ENCODE measurements at regions of chr3 and their contacts with region 1.

Region 1: DNA sequence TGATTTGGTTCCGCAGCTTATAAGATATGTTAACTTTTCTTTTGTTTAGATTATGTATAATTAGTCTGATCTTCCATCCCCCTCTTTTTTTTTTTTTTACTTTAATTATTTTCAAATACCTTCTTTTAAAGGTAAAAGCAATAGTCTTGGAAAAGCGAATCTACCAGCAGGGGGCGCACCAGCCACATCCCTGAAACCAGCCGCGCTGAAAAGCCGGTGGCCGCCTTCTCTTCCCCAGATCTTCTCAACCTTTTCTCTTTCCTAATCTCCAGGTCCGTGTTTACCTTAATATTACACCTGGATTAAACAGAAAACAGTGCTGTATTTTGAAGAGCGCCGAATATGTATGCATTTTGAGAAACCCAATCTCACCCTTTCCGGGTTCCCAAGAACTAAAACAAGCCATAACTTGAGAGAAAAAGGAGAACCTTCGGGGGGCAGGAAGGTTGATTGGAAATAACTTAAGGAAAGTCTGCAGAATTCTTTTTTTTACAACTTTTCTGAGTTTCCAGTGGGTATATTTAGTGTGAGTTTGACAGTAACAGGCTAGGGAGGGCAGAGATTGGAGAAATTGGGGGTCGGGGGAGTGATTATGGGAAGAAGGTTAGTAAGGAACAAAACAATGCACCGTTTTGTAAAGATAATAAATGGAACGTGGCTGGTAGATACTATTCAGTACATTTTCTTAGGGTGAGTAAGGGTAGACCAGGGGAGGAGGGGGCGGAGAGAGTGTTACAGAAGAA is 2.0 kb upstream of the SOX2 start:
- DNase-seq: peak; percentile 82
- H3K4me3 Mint-ChIP-seq: no peak overlapping the region
- H3K27ac Mint-ChIP-seq: no peak overlapping the region
- H3K4me1 Mint-ChIP-seq: peaks cover 10% of the 10 kb centered on the region
- H3K27me3 Mint-ChIP-seq: peaks cover 54% of the 10 kb centered on the region

Region 2: DNA sequence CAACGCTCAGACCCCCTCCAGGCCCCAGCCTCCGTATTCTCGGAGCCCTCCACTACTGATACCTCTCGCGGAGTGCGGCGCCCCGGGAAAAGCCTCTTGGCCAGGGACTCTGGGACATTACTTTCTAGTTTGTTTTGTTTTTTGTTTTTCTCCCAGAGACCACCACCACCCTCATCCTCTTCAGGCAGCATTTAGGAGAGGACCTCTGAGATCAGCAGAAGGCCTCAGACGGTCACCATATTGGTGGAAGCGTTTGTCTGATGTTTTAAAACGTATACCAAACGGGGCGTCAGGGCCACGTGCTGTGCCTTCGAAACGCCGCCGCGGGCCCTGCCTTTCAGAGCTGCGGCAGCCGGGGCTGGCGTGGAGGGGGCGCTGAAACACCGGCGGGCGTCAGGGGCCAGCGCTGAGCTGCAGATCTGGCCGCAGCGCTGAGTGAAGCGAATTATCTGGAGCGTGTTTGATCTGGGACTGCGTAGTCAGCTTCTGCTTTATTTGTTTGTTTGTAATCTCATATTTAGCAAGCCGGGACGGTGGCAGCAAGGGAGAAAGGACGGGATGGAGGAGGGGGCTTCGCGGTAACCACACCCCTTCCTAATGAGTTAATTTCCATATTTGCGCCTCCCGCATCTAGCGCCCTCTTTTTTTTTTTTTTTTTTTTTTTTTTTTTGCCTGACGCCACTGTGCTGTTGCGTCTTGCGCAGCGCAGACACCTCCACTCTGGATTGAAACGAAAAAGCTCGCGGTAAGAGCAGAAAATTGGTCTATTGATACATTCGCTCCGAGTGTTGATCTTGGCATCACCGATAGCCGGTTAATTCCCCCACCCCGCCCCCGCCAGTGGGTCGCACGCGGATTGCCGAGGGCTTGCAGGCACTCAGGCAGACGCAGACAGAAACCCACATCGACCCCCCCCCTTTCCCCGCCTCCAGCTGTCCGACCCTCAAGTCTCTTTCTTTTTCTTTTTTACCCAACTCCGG is 16.9 kb after region 1 on chr3:
- CTCF ChIA-PET with region 1: interaction called, 3 read pairs
- intact Hi-C with region 1: loop called (anchors 1 kb)
- DNase-seq: no peak
- H3K4me3 Mint-ChIP-seq: peak overlapping the region; percentile 49
- H3K27ac Mint-ChIP-seq: no peak overlapping the region
- H3K4me1 Mint-ChIP-seq: peaks cover 22% of the 10 kb centered on the region
- H3K27me3 Mint-ChIP-seq: peaks cover 88% of the 10 kb centered on the region

Region 3: GRCh38 chr3:181773921-181774320 is 64.2 kb after region 1 on chr3:
- CTCF ChIA-PET with region 1: no interaction called
- intact Hi-C with region 1: no loop called
- DNase-seq: no peak
- H3K4me3 Mint-ChIP-seq: no peak overlapping the region
- H3K27ac Mint-ChIP-seq: no peak overlapping the region
- H3K4me1 Mint-ChIP-seq: no peaks in the 10 kb centered on the region
- H3K27me3 Mint-ChIP-seq: no peaks in the 10 kb centered on the region

Region 4: GRCh38 chr3:182258538-182259177 is 549.0 kb after region 1 on chr3:
- CTCF ChIA-PET with region 1: no interaction called
- intact Hi-C with region 1: loop called (anchors 1 kb)
- DNase-seq: no peak
- H3K4me3 Mint-ChIP-seq: no peak overlapping the region
- H3K27ac Mint-ChIP-seq: no peak overlapping the region
- H3K4me1 Mint-ChIP-seq: no peaks in the 10 kb centered on the region
- H3K27me3 Mint-ChIP-seq: peaks cover 7% of the 10 kb centered on the region

Region 5: DNA sequence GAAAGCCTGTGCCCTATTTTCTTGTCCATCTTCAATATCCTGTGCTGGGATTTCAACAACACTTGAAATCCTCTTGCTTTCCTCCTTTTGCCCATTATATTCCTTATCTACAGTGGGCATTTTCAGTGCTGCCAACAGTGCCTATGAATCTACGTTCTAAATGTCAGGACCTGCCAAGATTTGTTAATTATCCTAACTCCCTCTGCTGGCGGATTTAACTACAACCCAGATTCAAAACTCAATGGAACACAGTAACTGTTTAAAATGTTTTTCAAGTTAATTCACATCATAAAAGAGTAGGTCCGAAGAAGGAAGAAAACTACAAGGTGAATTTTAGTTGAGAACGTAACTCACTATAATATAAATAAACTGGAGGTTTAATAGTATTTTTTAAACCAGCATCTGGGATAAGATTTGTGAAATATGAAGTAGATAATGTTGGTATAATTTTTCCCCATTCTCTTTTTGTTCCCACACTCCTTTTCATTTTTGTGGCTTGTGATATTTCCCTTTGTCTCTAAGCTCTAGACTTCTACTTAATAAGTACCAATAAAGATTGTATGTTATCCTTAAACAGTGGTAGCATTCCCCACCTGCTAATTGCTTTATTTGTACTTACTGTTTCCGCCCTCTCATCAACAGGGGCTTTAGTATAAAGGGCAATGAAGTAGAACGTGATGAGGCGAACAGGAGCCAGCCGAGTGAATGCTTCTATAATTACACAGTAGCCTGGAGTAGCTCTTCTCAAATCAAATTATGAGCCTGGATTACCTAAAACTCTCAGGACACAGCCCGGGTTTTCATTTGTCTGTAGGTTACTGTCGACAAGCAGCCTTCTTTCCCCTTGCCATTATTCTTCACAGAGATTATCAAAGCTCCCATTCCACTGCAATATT is 781.1 kb after region 1 on chr3:
- CTCF ChIA-PET with region 1: no interaction called
- intact Hi-C with region 1: loop called (anchors 2 kb)
- DNase-seq: no peak
- H3K4me3 Mint-ChIP-seq: no peak overlapping the region
- H3K27ac Mint-ChIP-seq: no peak overlapping the region
- H3K4me1 Mint-ChIP-seq: no peaks in the 10 kb centered on the region
- H3K27me3 Mint-ChIP-seq: no peaks in the 10 kb centered on the region

Region 6: DNA sequence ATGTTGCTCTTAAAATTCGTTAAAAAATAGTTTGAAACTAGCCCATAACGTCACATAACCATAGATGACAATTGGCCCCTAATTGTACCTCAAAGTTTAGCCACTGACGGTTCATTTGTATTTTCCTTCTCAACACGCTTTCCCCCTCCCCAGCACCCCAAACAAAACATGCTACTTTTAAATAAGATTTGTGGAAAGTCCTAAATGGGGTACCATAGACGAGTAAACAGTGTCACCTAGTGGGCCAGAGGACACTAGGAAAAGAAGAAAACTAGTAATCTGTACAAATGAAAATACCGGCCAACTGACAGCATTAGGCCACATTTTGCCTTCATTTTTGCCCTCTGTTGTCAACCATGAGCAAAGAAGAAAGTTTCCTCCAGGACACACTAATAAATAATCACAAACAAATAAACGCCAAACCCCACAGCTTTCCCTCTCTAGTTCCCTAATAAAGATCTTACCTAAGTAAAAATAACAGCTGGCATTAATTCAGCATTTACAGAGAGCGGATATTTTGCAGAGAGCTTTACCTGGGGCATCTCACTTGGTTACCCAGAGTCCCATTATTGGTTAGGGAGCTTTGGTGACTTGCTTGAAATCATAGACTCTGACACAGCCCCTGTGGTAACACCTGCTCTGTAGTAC is 908.5 kb after region 1 on chr3:
- CTCF ChIA-PET with region 1: no interaction called
- intact Hi-C with region 1: loop called (anchors 1 kb)
- DNase-seq: no peak
- H3K4me3 Mint-ChIP-seq: no peak overlapping the region
- H3K27ac Mint-ChIP-seq: no peak overlapping the region
- H3K4me1 Mint-ChIP-seq: no peaks in the 10 kb centered on the region
- H3K27me3 Mint-ChIP-seq: peaks cover 9% of the 10 kb centered on the region